Heart left ventricle (tissue), 16 donors: ENCODE measurements at regions of chr1 and their contacts with region 1.

Region 1: GRCh38 chr1:158117854-158118704 is 62.6 kb upstream of the CD1D start:
- DNase-seq: peak; percentile 31 to 81 (median 40)
- ATAC-seq: peak; percentile 27 to 86 (median 60)
- H3K4me3 ChIP-seq: peak overlapping the region in 8 of 12 donors; percentile 3 to 37 (median 29)
- H3K27ac ChIP-seq: no peak overlapping the region
- H3K4me1 ChIP-seq: peaks cover 0 to 21% (median 8%) of the 10 kb centered on the region in 12 donors
- H3K27me3 ChIP-seq: peaks cover 0 to 48% (median 9%) of the 10 kb centered on the region in 9 donors
- CTCF ChIP-seq: peak in 11 of 12 donors; percentile 20 to 70 (median 44)
- POLR2A ChIP-seq: no peak

Region 2: GRCh38 chr1:157725221-157725577 is 392.9 kb before region 1 on chr1:
- intact Hi-C with region 1: no loop called
- DNase-seq: no peak
- ATAC-seq: no peak
- H3K4me3 ChIP-seq: no peak overlapping the region
- H3K27ac ChIP-seq: peak overlapping the region in 1 of 12 donors; percentile 20
- H3K4me1 ChIP-seq: peaks cover 0 to 15% (median 0%) of the 10 kb centered on the region in 12 donors
- H3K27me3 ChIP-seq: no peaks in the 10 kb centered on the region
- CTCF ChIP-seq: no peak
- POLR2A ChIP-seq: no peak

Region 3: GRCh38 chr1:158043232-158043631 is 74.8 kb before region 1 on chr1:
- intact Hi-C with region 1: loop called in 1 of 10 experiments (anchors 5 kb)
- DNase-seq: no peak
- ATAC-seq: peak in 2 of 4 donors; percentile 43 to 44
- H3K4me3 ChIP-seq: no peak overlapping the region
- H3K27ac ChIP-seq: no peak overlapping the region
- H3K4me1 ChIP-seq: peaks cover 0 to 60% (median 16%) of the 10 kb centered on the region in 12 donors
- H3K27me3 ChIP-seq: peaks cover 0 to 3% (median 0%) of the 10 kb centered on the region in 9 donors
- CTCF ChIP-seq: no peak
- POLR2A ChIP-seq: no peak